ENCODE measurements at regions of chr17 and their contacts with region 1.

Region 1: DNA sequence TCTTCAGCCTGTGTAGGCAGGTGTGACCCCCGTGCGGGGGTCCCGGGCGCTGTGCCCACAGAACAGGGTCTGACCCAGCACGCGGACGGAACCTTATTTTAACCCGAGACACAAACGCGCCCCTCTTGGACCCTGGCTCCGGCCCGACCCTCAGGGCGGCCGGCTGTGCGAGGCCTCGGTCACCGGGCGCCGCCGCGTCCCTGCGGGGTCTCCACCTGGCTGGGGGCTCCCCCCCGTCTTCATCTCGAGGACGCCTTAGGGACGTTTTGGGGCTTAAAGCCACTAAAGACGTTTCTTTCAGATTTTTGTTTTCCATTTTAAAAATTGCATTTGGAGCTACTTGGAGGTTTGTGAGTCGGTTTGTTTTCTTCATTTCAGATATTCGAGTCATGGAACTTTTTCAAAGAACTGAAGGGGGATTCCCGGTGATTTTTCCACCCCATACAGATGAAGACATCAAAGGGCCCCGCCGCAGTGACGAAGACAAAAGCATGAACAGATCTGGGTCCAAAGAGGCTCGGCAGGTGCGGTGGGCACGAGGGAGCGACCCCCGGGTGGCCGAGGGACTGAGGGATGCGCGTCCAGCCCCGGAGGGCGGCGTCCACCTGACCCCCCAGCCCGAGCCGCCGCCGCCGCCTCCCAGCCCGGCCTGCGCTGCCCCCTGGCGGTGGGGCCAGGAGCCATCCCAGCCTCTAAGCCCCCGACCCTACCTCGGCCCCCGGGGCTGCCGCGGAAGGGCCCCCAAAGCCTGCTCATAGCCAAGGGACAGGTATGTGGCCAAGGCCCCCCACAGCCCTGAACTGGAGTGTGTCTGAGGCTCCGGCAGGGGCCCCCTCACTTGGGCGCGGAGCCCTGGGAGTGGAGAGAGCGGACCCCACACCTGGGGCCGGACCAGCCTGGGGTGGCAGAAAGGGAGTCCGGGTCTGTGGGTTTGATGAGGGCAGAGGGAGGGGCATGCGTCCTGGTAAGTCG is 3.8 kb upstream of the CD7 start:
- DNase-seq: peak; percentile 50 to 93 (median 64)
- ATAC-seq: peak; percentile 50
- H3K4me3 ChIP-seq: peak overlapping the region; percentile 45
- H3K4me3 Mint-ChIP-seq: peak overlapping the region; percentile 82
- H3K27ac ChIP-seq: peak overlapping the region in 1 of 2 donors; percentile 69
- H3K27ac Mint-ChIP-seq: peak overlapping the region; percentile 90
- H3K4me1 ChIP-seq: peaks cover 58% of the 10 kb centered on the region
- H3K4me1 Mint-ChIP-seq: peaks cover 33% of the 10 kb centered on the region
- H3K27me3 ChIP-seq: no peaks in the 10 kb centered on the region
- H3K27me3 Mint-ChIP-seq: no peaks in the 10 kb centered on the region
- CTCF ChIP-seq: peak; percentile 95

Region 2: DNA sequence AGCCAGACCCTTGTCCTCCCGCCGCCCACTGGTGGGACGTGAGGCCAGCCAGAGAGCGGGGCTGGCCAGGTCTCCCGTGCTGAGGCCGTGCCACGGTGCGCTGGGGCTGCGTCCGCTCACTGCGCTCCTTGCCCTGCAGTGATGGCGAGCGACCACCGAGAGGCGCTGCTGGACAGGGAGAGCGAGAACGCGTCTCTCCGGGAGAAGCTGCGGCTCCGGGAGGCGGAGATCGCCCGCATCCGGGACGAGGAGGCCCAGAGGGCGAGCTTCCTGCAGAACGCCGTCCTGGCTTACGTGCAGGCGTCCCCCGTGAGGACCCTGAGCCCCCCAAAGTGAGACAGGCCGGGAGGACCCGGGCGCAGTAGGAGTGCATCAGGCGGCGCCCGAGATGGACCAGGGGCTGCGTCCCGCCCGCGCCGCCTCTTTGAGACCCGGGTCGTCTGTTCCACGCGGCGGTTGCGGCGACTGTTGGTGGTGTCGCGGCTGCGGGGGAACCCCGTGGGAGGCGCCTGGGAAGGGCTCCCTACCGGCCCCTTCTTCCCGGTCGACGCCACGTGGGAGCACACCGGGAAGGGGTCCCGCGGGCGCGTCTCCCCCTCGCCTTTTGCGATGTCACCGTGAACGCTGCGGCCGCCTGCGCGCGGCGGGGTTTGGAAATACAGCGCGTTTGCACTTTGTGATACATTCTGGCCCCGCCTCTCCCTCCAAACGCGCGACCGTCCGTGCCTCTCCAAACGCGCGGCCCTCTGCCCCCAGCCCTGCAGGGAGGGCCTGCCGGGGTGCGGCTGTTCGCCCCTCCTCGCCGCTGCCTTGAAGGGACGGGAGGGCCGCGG is 290.6 kb before region 1 on chr17:
- CTCF ChIA-PET with region 1: no interaction called
- POLR2A ChIA-PET with region 1: interaction called, 5 read pairs
- intact Hi-C with region 1: loop called in 1 of 2 experiments (anchors 1 kb)
- DNase-seq: peak; percentile 73 to 92 (median 81)
- ATAC-seq: peak; percentile 85
- H3K4me3 ChIP-seq: peak overlapping the region; percentile 53
- H3K4me3 Mint-ChIP-seq: peak overlapping the region; percentile 91
- H3K27ac ChIP-seq: no peak overlapping the region
- H3K27ac Mint-ChIP-seq: no peak overlapping the region
- H3K4me1 ChIP-seq: peaks cover 28% of the 10 kb centered on the region
- H3K4me1 Mint-ChIP-seq: peaks cover 21% of the 10 kb centered on the region
- H3K27me3 ChIP-seq: no peaks in the 10 kb centered on the region
- H3K27me3 Mint-ChIP-seq: no peaks in the 10 kb centered on the region
- CTCF ChIP-seq: peak; percentile 97

Region 3: GRCh38 chr17:82205719-82206508 is 115.3 kb before region 1 on chr17:
- CTCF ChIA-PET with region 1: no interaction called
- POLR2A ChIA-PET with region 1: interaction called, 9 read pairs
- intact Hi-C with region 1: loop called in 1 of 2 experiments (anchors 1 kb)
- DNase-seq: peak; percentile 60 to 91 (median 77)
- ATAC-seq: peak; percentile 86
- H3K4me3 ChIP-seq: peak overlapping the region; percentile 16
- H3K4me3 Mint-ChIP-seq: peak overlapping the region; percentile 23
- H3K27ac ChIP-seq: peak overlapping the region; percentile 77 to 79
- H3K27ac Mint-ChIP-seq: peak overlapping the region; percentile 95
- H3K4me1 ChIP-seq: peaks cover 25% of the 10 kb centered on the region
- H3K4me1 Mint-ChIP-seq: peaks cover 50% of the 10 kb centered on the region
- H3K27me3 ChIP-seq: no peaks in the 10 kb centered on the region
- H3K27me3 Mint-ChIP-seq: no peaks in the 10 kb centered on the region
- CTCF ChIP-seq: peak; percentile 92

Region 4: DNA sequence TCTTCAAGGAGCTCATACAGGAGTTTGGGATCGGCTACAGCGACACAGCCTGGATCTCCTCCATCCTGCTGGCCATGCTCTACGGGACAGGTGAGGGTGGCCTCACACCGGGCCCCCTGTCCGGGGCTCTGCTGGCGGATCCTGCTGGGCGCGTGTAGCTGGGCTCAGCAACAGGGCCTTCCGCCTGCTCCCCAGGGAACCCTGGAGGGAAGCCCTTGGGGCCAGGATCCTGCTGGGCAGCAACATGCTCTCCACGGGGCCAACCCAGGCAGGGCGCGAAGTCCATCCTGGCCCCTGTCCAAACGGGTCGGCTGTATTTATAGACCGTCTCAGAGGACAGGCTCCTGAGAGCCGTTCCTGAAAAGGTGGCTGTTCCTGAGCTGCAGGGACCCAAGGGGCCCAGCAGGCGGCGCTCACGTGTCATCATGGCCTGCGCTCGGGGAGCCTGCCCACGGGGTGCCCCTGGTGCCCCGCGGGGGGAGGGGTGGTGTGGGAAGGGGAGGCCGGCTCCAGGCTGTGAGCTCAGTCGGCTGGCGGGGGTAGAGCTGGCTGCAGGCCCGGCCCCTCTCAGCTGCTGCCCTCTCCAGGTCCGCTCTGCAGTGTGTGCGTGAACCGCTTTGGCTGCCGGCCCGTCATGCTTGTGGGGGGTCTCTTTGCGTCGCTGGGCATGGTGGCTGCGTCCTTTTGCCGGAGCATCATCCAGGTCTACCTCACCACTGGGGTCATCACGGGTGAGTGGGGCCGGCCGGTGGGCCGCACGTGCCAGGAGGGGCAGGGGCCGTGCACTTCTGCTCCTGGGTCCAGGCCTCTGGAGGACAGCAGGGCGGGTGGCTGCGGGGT is 84.9 kb before region 1 on chr17:
- CTCF ChIA-PET with region 1: interaction called, 6 read pairs
- POLR2A ChIA-PET with region 1: interaction called, 10 read pairs
- intact Hi-C with region 1: loop called (anchors 1 to 5 kb)
- DNase-seq: peak; percentile 57 to 87 (median 66)
- ATAC-seq: peak; percentile 48
- H3K4me3 ChIP-seq: no peak overlapping the region
- H3K4me3 Mint-ChIP-seq: no peak overlapping the region
- H3K27ac ChIP-seq: peak overlapping the region in 1 of 2 donors; percentile 32
- H3K27ac Mint-ChIP-seq: peak overlapping the region; percentile 56
- H3K4me1 ChIP-seq: peaks cover 72% of the 10 kb centered on the region
- H3K4me1 Mint-ChIP-seq: peaks cover 40% of the 10 kb centered on the region
- H3K27me3 ChIP-seq: no peaks in the 10 kb centered on the region
- H3K27me3 Mint-ChIP-seq: no peaks in the 10 kb centered on the region
- CTCF ChIP-seq: peak; percentile 84

Region 5: DNA sequence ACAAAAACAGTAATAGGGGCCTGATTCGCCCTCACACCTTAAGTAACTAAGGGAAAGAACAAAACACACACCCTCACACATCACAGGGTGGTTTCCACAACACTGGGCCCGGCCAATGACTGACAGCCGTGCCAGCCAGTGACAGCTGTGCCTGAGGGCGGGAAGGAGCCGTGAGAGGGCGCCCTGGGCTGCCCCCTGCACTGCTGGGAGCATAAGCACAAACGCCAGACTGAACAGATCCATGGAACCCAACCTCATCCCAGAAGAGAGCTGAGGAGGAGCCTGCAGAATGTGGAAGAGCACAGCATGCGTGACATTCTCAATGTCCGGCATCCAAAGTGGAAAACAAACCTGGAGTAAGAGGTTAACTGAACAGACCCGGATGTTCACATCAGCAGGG is 63.8 kb before region 1 on chr17:
- CTCF ChIA-PET with region 1: interaction called, 3 read pairs
- POLR2A ChIA-PET with region 1: interaction called, 4 read pairs
- intact Hi-C with region 1: loop called in 1 of 2 experiments (anchors 5 kb)
- DNase-seq: peak in 9 of 14 experiments; percentile 27 to 78 (median 59)
- ATAC-seq: peak; percentile 86
- H3K4me3 ChIP-seq: no peak overlapping the region
- H3K4me3 Mint-ChIP-seq: no peak overlapping the region
- H3K27ac ChIP-seq: no peak overlapping the region
- H3K27ac Mint-ChIP-seq: peak overlapping the region; percentile 80
- H3K4me1 ChIP-seq: peaks cover 7% of the 10 kb centered on the region
- H3K4me1 Mint-ChIP-seq: peaks cover 23% of the 10 kb centered on the region
- H3K27me3 ChIP-seq: no peaks in the 10 kb centered on the region
- H3K27me3 Mint-ChIP-seq: no peaks in the 10 kb centered on the region
- CTCF ChIP-seq: no peak

Region 6: DNA sequence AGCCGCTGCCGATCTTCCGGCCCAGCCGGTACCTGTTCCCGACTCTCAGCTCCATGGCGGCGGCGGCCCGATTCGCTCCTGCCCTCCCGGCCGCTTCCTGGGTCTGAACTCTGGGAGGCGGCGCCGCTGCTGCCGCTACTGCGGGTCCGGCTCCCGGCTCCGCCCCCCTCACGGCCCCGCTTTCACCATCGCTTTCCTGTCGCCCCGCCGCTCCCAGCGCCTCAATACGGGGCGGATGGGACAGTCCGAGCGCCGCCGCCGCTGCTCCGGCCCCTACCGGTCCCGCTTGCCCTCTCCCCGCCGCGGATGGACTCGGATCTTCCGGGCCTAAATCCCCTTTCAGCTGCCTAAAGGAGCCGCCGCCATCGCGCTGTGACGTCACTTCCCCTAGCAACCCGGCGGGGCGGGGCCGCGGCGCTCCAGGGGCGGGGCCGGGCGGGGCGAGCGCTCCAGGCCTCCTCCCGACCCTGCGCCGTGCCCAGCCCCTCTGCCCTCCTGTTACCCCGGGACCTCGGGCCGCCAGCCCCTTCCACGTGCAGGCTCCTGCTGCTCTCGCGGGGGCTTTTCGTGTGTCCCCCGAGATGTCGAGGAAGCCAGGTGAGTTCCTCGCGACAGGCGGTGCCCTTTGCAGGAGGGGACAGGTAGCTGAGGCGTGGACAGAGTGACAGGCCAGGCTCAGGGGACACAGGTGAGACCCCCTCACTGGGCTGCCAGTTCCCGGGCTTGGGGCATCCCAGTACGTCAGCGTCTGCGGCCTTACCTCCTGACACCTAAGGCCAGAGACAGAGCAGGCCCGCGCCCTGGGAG is 47.7 kb before region 1 on chr17 and contains the start of gene CSNK1D:
- CTCF ChIA-PET with region 1: no interaction called
- POLR2A ChIA-PET with region 1: interaction called, 3 read pairs
- intact Hi-C with region 1: loop called (anchors 1 to 2 kb)
- DNase-seq: peak; percentile 84 to 95 (median 92)
- ATAC-seq: peak; percentile 79
- H3K4me3 ChIP-seq: peak within 1 kb of the TSS; percentile 75
- H3K4me3 Mint-ChIP-seq: peak within 1 kb of the TSS; percentile 98
- H3K27ac ChIP-seq: peak within 1 kb of the TSS; percentile 70 to 78
- H3K27ac Mint-ChIP-seq: peak within 1 kb of the TSS; percentile 99
- H3K4me1 ChIP-seq: peaks cover 50% of the 10 kb centered on the region
- H3K4me1 Mint-ChIP-seq: peaks cover 39% of the 10 kb centered on the region
- H3K27me3 ChIP-seq: no peaks in the 10 kb centered on the region
- H3K27me3 Mint-ChIP-seq: no peaks in the 10 kb centered on the region
- CTCF ChIP-seq: no peak
- total RNA-seq, gene CSNK1D: 277 to 286 TPM